ENCODE measurements at regions of chr4 and their contacts with region 1.

Region 1: GRCh38 chr4:110193822-110194761 is 4.3 kb downstream of the ELOVL6 start:
- DNase-seq: peak; percentile 85 to 96 (median 90)
- ATAC-seq: peak; percentile 71
- H3K4me3 ChIP-seq: no peak overlapping the region
- H3K27ac ChIP-seq: peak overlapping the region; percentile 98
- H3K4me1 ChIP-seq: peaks cover 22 to 26% of the 10 kb centered on the region in 2 experiments
- H3K27me3 ChIP-seq: no peaks in the 10 kb centered on the region
- CTCF ChIP-seq: no peak
- EP300 ChIP-seq: peak; percentile 47; the same call in 1 of the 2 replicates
- POLR2A ChIP-seq: peak; percentile 98
- RAD21 ChIP-seq: no peak

Region 2: DNA sequence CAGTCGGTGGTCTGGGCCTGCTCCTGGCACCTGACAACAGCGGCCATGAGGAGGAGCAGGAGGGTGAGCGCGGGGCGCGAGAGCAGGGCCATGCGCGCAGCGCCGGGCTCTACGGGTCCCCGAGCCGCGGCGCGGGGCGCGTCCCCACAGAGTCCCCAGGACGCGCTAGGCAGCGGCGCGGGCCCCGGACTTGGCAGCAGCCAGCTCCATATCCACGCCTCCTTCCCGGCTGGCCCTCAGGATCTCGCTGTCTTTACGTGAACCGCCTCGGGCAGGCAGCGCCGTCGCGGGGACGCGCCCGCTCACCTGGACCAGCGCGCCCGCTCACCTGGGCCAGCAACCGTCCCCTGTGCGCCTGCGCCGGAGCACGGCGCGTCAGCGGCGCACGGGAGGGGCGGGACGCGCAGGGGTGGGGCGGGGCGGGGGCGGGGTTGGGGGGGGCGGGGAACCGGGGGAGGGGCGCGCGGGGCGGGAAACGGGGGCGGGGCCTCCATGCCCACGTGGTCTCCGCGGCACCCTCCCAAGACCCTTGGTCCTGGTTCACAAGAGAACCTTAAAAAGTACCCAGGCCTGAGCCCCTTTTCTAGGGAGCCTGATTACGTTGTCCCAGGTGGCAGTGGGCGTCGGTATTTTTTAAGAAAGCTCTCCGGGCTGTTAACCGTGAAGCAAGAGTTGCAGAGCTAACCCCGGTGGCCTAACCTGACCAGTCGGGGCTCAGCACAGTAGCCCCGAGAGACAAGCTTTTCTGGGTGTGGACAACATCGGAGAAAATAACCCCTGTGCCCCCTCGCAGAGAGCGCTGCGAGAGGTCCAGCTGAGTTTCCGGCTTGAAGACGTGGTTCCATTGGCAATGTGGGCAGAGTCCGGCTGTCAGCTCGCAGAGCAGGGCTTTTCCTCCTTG is 464.1 kb before region 1 on chr4 and contains the start of gene PLA2G12A:
- CTCF ChIA-PET with region 1: no interaction called
- POLR2A ChIA-PET with region 1: no interaction called
- in situ Hi-C with region 1: no loop called
- intact Hi-C with region 1: loop called (anchors 5 kb)
- DNase-seq: peak; percentile 80 to 95 (median 93)
- ATAC-seq: peak; percentile 89
- H3K4me3 ChIP-seq: peak within 1 kb of the TSS; percentile 81
- H3K27ac ChIP-seq: peak within 1 kb of the TSS; percentile 89
- H3K4me1 ChIP-seq: peaks cover 15 to 30% of the 10 kb centered on the region in 2 experiments
- H3K27me3 ChIP-seq: no peaks in the 10 kb centered on the region
- CTCF ChIP-seq: no peak
- EP300 ChIP-seq: no peak
- POLR2A ChIP-seq: peak; percentile 64
- RAD21 ChIP-seq: no peak
- polyA plus RNA-seq, gene PLA2G12A: 24.2 to 24.6 TPM

Region 3: GRCh38 chr4:109815151-109816081 is 378.7 kb before region 1 on chr4 and contains the start of gene GAR1:
- CTCF ChIA-PET with region 1: no interaction called
- POLR2A ChIA-PET with region 1: no interaction called
- in situ Hi-C with region 1: no loop called
- intact Hi-C with region 1: loop called (anchors 10 kb)
- DNase-seq: peak; percentile 85 to 98 (median 88)
- ATAC-seq: peak; percentile 92
- H3K4me3 ChIP-seq: peak within 1 kb of the TSS; percentile 85
- H3K27ac ChIP-seq: peak within 1 kb of the TSS; percentile 82
- H3K4me1 ChIP-seq: peaks cover 8 to 20% of the 10 kb centered on the region in 2 experiments
- H3K27me3 ChIP-seq: no peaks in the 10 kb centered on the region
- CTCF ChIP-seq: 0 out of 6 replicates have a peak, but pooled peaks of 1 of the 3 experiments have one; percentile 9
- EP300 ChIP-seq: peak; percentile 72
- POLR2A ChIP-seq: peak; percentile 90
- RAD21 ChIP-seq: no peak; a peak in 1 of 4 replicates
- polyA plus RNA-seq, gene GAR1: 35.7 to 44.2 TPM

Region 4: DNA sequence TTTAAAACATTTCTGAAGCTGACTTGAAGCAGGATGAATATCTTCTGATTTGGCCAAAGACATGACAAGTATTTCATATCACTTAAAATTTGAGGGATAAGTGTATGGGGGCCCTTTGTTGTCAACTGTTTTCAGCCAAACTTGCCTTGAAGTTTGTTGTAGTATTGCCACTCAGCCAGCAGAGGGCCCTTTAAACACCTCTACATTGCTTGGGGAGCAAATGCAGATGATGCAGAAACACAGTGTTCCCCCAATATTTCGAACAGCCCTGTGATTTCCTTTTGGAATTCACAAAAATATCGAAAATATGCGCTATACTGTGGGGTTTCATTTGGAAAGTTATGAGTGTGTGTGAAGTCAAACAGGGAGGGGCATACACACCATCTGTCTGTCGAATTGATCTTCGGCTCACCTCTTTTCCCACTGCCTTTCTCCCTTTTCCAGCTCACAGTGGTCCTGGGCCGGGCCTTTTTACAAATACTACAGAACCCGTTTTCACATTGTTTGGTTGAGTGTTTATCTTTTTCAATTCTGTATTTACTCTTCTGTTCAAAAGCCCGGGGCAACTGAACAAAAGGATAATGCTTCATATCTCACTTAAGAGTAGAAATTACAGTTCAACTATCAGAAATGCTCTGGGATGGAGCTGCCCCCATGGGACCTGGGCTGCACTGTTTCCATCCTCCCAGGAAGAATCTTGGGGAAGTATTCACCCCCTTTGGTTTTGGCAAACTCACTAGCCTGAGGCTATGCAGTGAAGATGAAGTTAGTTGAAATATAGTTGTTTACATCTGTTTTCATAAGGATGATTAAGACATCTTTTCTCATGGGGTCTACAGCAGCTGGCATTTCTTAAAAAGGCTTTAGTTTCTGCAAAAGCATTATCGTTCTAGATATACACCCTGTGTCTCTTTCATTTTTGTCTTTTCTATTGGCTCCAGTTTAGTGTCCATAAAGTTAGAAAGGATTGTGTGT is 143.9 kb before region 1 on chr4:
- CTCF ChIA-PET with region 1: no interaction called
- POLR2A ChIA-PET with region 1: no interaction called
- in situ Hi-C with region 1: no loop called
- intact Hi-C with region 1: loop called (anchors 5 kb)
- DNase-seq: peak; percentile 48 to 65 (median 60)
- ATAC-seq: peak; percentile 77
- H3K4me3 ChIP-seq: no peak overlapping the region
- H3K27ac ChIP-seq: no peak overlapping the region
- H3K4me1 ChIP-seq: no peaks in the 10 kb centered on the region
- H3K27me3 ChIP-seq: no peaks in the 10 kb centered on the region
- CTCF ChIP-seq: peak; percentile 60 to 75 (median 73)
- EP300 ChIP-seq: no peak
- POLR2A ChIP-seq: no peak
- RAD21 ChIP-seq: peak; percentile 72 to 76

Region 5: DNA sequence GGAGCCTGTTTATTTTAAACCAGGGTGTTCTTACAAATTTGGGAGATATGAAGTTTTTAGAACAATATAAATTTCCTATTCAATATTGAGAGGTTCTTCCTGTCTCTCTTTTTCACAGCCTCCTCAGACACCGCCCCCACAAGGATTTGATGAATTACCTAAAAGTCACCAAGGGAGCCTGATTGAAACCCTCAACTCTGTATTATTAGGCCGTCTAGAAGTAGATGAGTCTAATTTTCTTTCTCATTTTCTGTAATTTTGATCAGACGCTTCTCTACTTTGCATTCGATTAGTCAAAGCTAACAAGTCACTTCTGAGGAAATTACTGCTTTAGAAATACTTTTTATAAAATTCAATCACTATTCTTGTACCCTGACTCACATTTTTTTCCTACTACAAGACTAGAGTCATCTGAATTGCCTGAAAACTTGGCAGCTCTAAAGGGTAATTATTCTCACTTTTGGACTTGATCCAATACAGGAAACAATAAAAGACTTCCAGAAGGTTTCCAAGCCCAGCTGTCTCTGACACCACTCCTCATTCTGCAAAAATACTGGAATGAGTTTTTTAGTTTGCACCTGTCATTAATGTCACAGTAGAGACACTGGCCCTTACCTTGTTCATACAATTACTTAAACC is 106.9 kb before region 1 on chr4:
- CTCF ChIA-PET with region 1: no interaction called
- POLR2A ChIA-PET with region 1: interaction called, 3 read pairs
- in situ Hi-C with region 1: no loop called
- intact Hi-C with region 1: loop called (anchors 5 kb)
- DNase-seq: no peak
- ATAC-seq: no peak
- H3K4me3 ChIP-seq: no peak overlapping the region
- H3K27ac ChIP-seq: no peak overlapping the region
- H3K4me1 ChIP-seq: peaks cover 0 to 27% of the 10 kb centered on the region in 2 experiments; a peak in 3 of 5 replicates
- H3K27me3 ChIP-seq: no peaks in the 10 kb centered on the region
- CTCF ChIP-seq: no peak
- EP300 ChIP-seq: no peak
- POLR2A ChIP-seq: no peak
- RAD21 ChIP-seq: no peak

Region 6: GRCh38 chr4:110139815-110140214 is 54.3 kb before region 1 on chr4:
- CTCF ChIA-PET with region 1: no interaction called
- POLR2A ChIA-PET with region 1: interaction called, 3 read pairs
- in situ Hi-C with region 1: no loop called
- intact Hi-C with region 1: loop called (anchors 5 kb)
- DNase-seq: no peak
- ATAC-seq: peak; percentile 45; the same call in 2 of the 3 replicates
- H3K4me3 ChIP-seq: no peak overlapping the region
- H3K27ac ChIP-seq: no peak overlapping the region
- H3K4me1 ChIP-seq: 0 out of 5 replicates have a peak, but pooled peaks cover 0 to 4% of the 10 kb centered on the region in 2 experiments
- H3K27me3 ChIP-seq: no peaks in the 10 kb centered on the region
- CTCF ChIP-seq: no peak
- EP300 ChIP-seq: no peak
- POLR2A ChIP-seq: no peak
- RAD21 ChIP-seq: no peak

Region 7: DNA sequence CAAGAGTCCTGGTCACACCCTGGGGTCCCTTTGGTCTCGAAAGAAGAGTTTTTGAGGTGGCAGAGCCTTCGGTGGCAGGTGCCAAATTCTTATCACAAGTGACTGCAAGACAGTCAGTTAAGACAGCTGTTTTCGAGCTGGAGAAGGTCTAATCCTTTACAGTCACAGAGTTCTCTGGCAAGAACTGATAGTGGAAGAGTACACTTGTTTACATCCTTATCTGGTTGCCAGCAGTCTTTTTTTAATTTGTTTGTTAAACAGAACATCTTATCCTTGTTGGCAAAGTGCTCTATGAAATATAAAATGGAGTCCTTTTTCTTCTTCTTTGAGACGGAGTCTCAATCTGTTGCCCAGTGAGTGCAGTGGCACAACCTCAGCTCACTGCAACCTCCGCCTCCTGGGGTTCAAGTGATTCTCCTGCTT is 54.8 kb after region 1 on chr4:
- CTCF ChIA-PET with region 1: no interaction called
- POLR2A ChIA-PET with region 1: no interaction called
- in situ Hi-C with region 1: no loop called
- intact Hi-C with region 1: loop called (anchors 2 kb)
- DNase-seq: peak; percentile 67 to 89 (median 76)
- ATAC-seq: peak; percentile 83
- H3K4me3 ChIP-seq: no peak overlapping the region
- H3K27ac ChIP-seq: peak overlapping the region; percentile 54; the same call in 2 of the 3 replicates
- H3K4me1 ChIP-seq: peaks cover 20 to 38% of the 10 kb centered on the region in 2 experiments
- H3K27me3 ChIP-seq: no peaks in the 10 kb centered on the region
- CTCF ChIP-seq: no peak
- EP300 ChIP-seq: peak; percentile 100
- POLR2A ChIP-seq: no peak
- RAD21 ChIP-seq: 0 out of 4 replicates have a peak, but pooled peaks of 1 of the 2 experiments have one; percentile 5

Measured in K562 (cell line).